ENCODE measurements at regions of chr17 and their contacts with region 1.

Region 1: GRCh38 chr17:41060052-41060604 is at the start of gene KRTAP2-3:
- DNase-seq: no peak
- ATAC-seq: no peak
- H3K4me3 ChIP-seq: no peak within 1 kb of the TSS
- H3K27ac ChIP-seq: no peak within 1 kb of the TSS
- H3K4me1 ChIP-seq: no peaks in the 10 kb centered on the region
- H3K27me3 ChIP-seq: peaks cover 0 to 21% (median 7%) of the 10 kb centered on the region in 3 donors
- CTCF ChIP-seq: no peak
- POLR2A ChIP-seq: no peak
- total RNA-seq, gene KRTAP2-3: not detected

Region 2: DNA sequence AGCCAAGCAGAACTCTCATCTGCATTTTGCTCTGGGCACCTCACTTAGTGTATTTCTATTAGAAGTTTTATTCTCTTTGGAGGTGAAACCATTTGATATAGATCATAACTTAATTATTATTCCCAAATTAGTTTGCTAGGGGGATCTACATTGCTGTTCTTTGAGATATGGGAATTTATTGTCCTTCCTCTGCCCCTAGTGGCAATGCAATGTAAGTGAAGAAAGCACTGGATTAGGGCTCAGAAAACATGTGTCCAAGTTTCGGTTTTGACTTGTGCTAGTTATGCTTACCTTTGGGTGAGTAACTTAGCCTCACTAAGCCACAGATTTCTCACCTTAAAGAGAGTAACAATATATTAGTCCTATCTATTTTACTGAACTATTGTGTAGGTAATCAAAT is 96.3 kb before region 1 on chr17:
- in situ Hi-C with region 1: loop called in 1 of 4 experiments (anchors 25 kb)
- intact Hi-C with region 1: no loop called
- DNase-seq: no peak
- ATAC-seq: no peak
- H3K4me3 ChIP-seq: no peak overlapping the region
- H3K27ac ChIP-seq: no peak overlapping the region
- H3K4me1 ChIP-seq: no peaks in the 10 kb centered on the region
- H3K27me3 ChIP-seq: no peaks in the 10 kb centered on the region
- CTCF ChIP-seq: peak in 3 of 5 experiments; percentile 7 to 52 (median 35)
- POLR2A ChIP-seq: no peak

Measured in gastrocnemius medialis (tissue), 4 donors.